PC-9 (cell line): ENCODE measurements at regions of chr7 and their contacts with region 1.

Region 1: DNA sequence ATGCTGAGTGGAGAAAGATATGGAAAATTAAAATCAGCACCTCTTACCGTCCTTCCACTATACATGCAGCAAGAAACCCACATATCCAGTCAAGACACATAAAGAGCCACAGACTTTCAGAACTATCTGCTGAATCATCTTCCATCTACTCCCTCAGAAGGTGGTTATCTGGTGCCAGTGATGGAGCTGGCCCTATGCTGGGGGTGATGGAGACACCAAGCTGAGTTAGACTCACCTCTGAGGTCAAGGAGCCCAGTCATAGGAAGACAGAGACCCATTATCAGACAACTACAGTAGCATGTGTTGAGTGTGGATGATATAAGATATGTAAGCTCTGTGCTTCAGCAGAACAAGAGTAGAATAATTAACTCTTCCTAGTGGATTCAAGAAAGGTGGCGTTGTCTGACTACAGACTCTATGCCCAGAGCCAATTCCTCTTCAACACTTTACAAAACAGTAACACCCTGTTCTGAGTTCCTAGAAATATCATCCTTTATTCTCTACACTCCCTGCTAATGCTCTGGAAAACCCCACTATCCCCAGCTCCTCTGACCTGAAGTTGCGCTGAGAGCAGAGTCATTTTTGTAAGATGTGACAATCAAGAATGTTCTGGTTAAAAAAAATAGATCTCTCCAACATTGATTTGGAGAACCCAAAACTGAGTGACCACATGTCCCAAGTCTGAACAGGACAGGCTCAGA is 14.3 kb downstream of the CYP3A5 start:
- DNase-seq: no peak
- H3K4me3 ChIP-seq: no peak overlapping the region
- H3K27ac ChIP-seq: no peak overlapping the region
- H3K4me1 ChIP-seq: no peaks in the 10 kb centered on the region
- H3K27me3 ChIP-seq: no peaks in the 10 kb centered on the region
- CTCF ChIP-seq: no peak

Region 2: GRCh38 chr7:99997545-99998137 is 332.2 kb after region 1 on chr7:
- CTCF ChIA-PET with region 1: no interaction called
- POLR2A ChIA-PET with region 1: no interaction called
- intact Hi-C with region 1: no loop called
- DNase-seq: no peak
- H3K4me3 ChIP-seq: no peak overlapping the region
- H3K27ac ChIP-seq: no peak overlapping the region
- H3K4me1 ChIP-seq: 0 out of 2 replicates have a peak, but pooled peaks cover 3% of the 10 kb centered on the region
- H3K27me3 ChIP-seq: peaks cover 44% of the 10 kb centered on the region
- CTCF ChIP-seq: no peak

Region 3: GRCh38 chr7:100753750-100754149 is 1088.3 kb after region 1 on chr7:
- CTCF ChIA-PET with region 1: no interaction called
- POLR2A ChIA-PET with region 1: interaction called, 11 read pairs
- intact Hi-C with region 1: no loop called
- DNase-seq: no peak
- H3K4me3 ChIP-seq: no peak overlapping the region
- H3K27ac ChIP-seq: no peak overlapping the region
- H3K4me1 ChIP-seq: no peaks in the 10 kb centered on the region
- H3K27me3 ChIP-seq: peaks cover 21% of the 10 kb centered on the region; the same call in 1 of the 2 replicates
- CTCF ChIP-seq: no peak